K562 (cell line): ENCODE measurements at regions of chr2 and their contacts with region 1.

Region 1: GRCh38 chr2:70616168-70616694 is 62.6 kb upstream of the TGFA start:
- DNase-seq: no peak
- ATAC-seq: no peak
- H3K4me3 ChIP-seq: no peak overlapping the region
- H3K27ac ChIP-seq: no peak overlapping the region
- H3K4me1 ChIP-seq: no peaks in the 10 kb centered on the region
- H3K27me3 ChIP-seq: peaks cover 0 to 18% of the 10 kb centered on the region in 2 experiments; a peak in 3 of 5 replicates
- CTCF ChIP-seq: no peak
- EP300 ChIP-seq: no peak
- POLR2A ChIP-seq: no peak
- RAD21 ChIP-seq: no peak

Region 2: DNA sequence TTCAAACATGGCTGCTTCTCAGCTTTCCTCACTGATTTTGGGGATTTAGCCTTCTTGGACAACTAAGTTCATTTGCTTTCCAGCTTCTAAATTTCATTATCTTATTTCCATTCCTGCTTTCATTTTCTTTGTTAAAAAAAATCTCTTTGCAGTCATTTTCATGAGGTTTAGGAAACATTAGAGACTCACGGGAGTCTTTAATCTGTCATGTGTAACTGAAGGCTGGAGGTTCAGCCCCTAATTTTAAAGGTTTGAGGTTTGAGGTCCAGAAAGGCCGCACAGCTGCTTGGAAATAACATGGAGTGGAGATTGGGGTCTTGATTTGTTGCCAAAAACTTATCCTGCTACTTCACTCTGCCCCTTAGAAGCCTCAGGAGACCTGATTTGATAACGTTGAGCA is 1942.6 kb before region 1 on chr2:
- CTCF ChIA-PET with region 1: no interaction called
- POLR2A ChIA-PET with region 1: no interaction called
- in situ Hi-C with region 1: no loop called
- intact Hi-C with region 1: no loop called
- DNase-seq: no peak
- ATAC-seq: no peak
- H3K4me3 ChIP-seq: no peak overlapping the region
- H3K27ac ChIP-seq: no peak overlapping the region
- H3K4me1 ChIP-seq: no peaks in the 10 kb centered on the region; a peak in 1 of 5 replicates
- H3K27me3 ChIP-seq: no peaks in the 10 kb centered on the region
- CTCF ChIP-seq: no peak
- EP300 ChIP-seq: no peak
- POLR2A ChIP-seq: no peak
- RAD21 ChIP-seq: no peak

Region 3: DNA sequence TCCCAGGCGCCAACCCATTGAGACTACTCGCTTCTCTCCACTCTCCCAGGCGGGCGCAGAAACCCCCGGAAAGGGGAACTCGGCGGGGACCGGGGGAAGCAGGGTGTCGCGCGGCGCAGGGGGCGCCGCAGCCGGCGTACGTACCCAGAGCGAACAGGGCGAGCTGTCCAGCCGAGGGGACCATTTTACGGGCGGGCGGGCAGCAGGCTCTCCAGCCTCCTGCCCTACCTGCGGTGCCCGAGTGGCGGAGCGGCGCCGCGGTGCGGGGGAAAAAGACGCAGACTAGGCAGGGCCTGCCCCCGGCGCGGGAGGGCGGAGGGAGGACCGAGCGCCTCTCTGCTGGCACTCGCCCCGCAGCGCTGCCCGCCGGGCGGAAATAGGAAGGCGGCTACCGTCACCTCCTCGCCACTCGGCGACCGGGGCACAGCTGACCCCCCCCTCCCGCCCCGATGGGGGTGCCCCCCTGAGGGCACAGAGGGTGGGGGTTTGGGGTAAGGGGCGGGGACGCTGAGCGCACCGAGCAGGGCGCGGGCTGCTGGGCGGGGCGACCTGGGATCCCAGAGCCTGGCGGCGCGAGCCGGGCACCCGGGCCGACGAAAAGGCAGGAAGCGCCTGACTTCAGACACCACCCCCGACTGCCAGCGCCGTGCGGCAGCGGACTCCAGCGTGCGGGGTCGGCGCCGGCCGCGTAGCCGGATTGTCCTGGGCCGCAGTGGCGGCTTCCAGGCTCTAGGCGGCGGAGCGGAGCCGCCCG is 62.5 kb before region 1 on chr2 and contains the start of gene TGFA:
- CTCF ChIA-PET with region 1: no interaction called
- POLR2A ChIA-PET with region 1: no interaction called
- in situ Hi-C with region 1: no loop called
- intact Hi-C with region 1: loop called (anchors 5 kb)
- DNase-seq: peak; percentile 36 to 61 (median 54)
- ATAC-seq: peak; percentile 98
- H3K4me3 ChIP-seq: 0 out of 2 replicates have a peak within 1 kb of the TSS, but pooled peaks have one; percentile 10
- H3K27ac ChIP-seq: no peak within 1 kb of the TSS
- H3K4me1 ChIP-seq: peaks cover 0 to 15% of the 10 kb centered on the region in 2 experiments; a peak in 2 of 5 replicates
- H3K27me3 ChIP-seq: peaks cover 41 to 57% of the 10 kb centered on the region in 2 experiments
- CTCF ChIP-seq: peak; percentile 64 to 84 (median 71)
- EP300 ChIP-seq: no peak
- POLR2A ChIP-seq: no peak
- RAD21 ChIP-seq: peak in 1 of 2 experiments; percentile 36; a peak in 2 of 4 replicates
- polyA plus RNA-seq, gene TGFA: not detected

Region 4: DNA sequence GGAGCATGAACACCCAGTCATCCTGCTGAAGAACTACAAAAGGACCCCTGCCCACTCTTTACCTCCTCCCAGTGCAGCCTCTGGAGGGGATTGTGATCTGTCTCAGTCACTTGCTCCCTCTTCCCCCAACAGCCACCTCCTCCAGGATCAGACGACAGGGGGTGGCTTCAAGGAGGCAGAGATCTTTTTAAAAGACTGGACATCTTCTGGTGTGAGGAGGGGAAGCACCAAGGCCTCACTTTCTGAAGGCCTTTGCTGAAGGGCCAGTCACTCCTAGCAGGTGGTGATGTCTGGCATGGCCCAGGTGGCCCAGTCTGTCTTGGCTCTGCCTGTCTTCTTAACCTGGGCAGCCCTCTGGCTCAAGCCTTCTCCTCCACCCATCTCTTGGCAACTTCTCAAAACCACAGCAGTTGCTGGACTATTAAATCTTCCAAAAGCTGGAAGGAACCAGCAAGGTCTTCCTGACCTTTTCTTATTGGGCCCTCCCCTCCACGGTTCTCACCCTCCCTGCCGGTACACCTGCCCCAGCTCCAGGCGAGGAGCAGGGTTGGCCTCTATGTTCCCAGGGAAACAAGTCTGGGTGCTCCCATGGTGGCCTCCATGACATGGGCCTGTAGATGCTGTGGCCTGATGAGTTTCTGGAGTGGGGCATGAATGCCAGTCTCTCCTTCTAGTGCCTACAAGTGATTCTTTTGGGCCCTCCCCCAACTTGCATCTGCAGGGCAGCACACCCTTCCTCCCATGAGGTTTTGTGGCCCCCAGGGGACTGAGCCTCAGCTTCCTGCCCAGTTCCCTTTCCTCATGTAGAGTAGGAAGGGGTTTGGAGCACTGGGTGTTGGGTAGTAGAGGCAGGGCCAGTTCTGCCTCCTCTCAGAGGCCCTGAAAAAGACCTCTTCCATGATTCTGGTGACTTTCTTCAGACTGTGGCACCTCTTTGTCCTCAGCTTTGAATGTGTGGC is 314.4 kb after region 1 on chr2:
- CTCF ChIA-PET with region 1: no interaction called
- POLR2A ChIA-PET with region 1: no interaction called
- in situ Hi-C with region 1: no loop called
- intact Hi-C with region 1: no loop called
- DNase-seq: peak in 1 of 4 experiments; percentile 2
- ATAC-seq: no peak
- H3K4me3 ChIP-seq: no peak overlapping the region
- H3K27ac ChIP-seq: no peak overlapping the region
- H3K4me1 ChIP-seq: peaks cover 0 to 5% of the 10 kb centered on the region in 2 experiments; a peak in 1 of 5 replicates
- H3K27me3 ChIP-seq: peaks cover 16 to 63% of the 10 kb centered on the region in 2 experiments; a peak in 3 of 5 replicates
- CTCF ChIP-seq: no peak
- EP300 ChIP-seq: no peak
- POLR2A ChIP-seq: no peak
- RAD21 ChIP-seq: no peak